Activated T-helper 1 cell treated with anti-CD3 and anti-CD28 coated beads, Interleukin-12 subunit alpha, Interleukin-12 subunit beta, Interleukin-2, Interleukin-4 antibody, amounts not matched to agents 30 ng/mL and 10 ng/mL and 1 ng/mL, durations not matched to agents 14 hours and 24 hours and 36 hours (primary cell): ENCODE measurements at regions of chr14 and their contacts with region 1.

Region 1: GRCh38 chr14:64986578-64987571 is at the start of gene FNTB:
- DNase-seq: peak; percentile 90
- H3K4me3 Mint-ChIP-seq: peak within 1 kb of the TSS; percentile 98
- H3K27ac Mint-ChIP-seq: peak within 1 kb of the TSS; percentile 99
- H3K4me1 Mint-ChIP-seq: peaks cover 51% of the 10 kb centered on the region
- H3K27me3 Mint-ChIP-seq: peaks cover 22% of the 10 kb centered on the region
- total RNA-seq, gene FNTB: 14.3 and 17.8 TPM in 2 replicates

Region 2: GRCh38 chr14:64671591-64671990 is 315.3 kb before region 1 on chr14:
- intact Hi-C with region 1: loop called (anchors 5 kb)
- DNase-seq: no peak
- H3K4me3 Mint-ChIP-seq: no peak overlapping the region
- H3K27ac Mint-ChIP-seq: no peak overlapping the region
- H3K4me1 Mint-ChIP-seq: peaks cover 36% of the 10 kb centered on the region
- H3K27me3 Mint-ChIP-seq: peaks cover 18% of the 10 kb centered on the region

Region 3: DNA sequence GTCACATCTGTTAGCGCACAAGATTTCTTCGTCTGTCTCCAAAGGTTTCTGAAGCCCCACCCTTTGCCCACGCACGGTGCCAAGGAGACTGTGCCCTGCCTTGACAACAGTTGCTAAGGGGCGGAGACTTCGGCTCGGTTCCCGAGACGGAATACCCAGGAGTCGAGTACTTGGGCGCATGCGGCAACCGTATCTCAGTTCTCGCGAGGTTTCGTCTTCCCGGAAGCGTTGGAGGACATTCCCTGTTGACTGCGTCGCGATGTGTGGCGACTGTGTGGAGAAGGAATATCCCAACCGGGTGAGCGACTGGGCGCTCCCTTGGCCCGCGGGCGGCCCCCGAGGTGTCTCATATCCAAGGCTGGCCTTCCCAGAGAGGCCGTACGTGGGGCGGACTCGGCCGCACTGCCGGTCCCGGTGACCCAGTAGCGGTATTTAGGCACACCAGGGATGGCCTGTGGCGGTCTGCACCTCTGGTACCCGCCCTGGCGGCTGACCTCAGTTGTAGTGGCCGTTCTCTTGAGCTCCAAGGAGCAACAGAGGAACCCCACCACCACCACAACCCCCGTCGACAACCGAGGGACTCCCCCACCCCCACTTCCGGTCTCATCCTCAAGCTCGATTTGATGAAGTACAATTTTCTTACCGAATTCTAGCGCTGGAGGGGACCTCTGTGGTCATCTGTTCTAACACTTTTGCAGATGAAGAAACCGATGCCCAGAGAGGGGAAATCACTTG is 72.5 kb before region 1 on chr14 and contains the start of gene CHURC1:
- intact Hi-C with region 1: loop called (anchors 1 kb)
- DNase-seq: peak; percentile 93
- H3K4me3 Mint-ChIP-seq: peak within 1 kb of the TSS; percentile 88
- H3K27ac Mint-ChIP-seq: peak within 1 kb of the TSS; percentile 94
- H3K4me1 Mint-ChIP-seq: peaks cover 51% of the 10 kb centered on the region
- H3K27me3 Mint-ChIP-seq: peaks cover 5% of the 10 kb centered on the region
- total RNA-seq, gene CHURC1: 50.7 and 51.3 TPM in 2 replicates

Region 4: GRCh38 chr14:64971943-64972791 is 14.7 kb before region 1 on chr14 and contains the start of gene RAB15:
- intact Hi-C with region 1: loop called (anchors 1 kb)
- DNase-seq: peak; percentile 29
- H3K4me3 Mint-ChIP-seq: peak within 1 kb of the TSS; percentile 84
- H3K27ac Mint-ChIP-seq: peak within 1 kb of the TSS; percentile 71
- H3K4me1 Mint-ChIP-seq: no peaks in the 10 kb centered on the region
- H3K27me3 Mint-ChIP-seq: peaks cover 31% of the 10 kb centered on the region
- total RNA-seq, gene RAB15: 5.7 and 6.0 TPM in 2 replicates

Region 5: GRCh38 chr14:65019944-65020566 is 33.2 kb after region 1 on chr14:
- intact Hi-C with region 1: loop called (anchors 1 kb)
- DNase-seq: no peak
- H3K4me3 Mint-ChIP-seq: no peak overlapping the region
- H3K27ac Mint-ChIP-seq: no peak overlapping the region
- H3K4me1 Mint-ChIP-seq: no peaks in the 10 kb centered on the region
- H3K27me3 Mint-ChIP-seq: no peaks in the 10 kb centered on the region

Region 6: GRCh38 chr14:65170768-65171507 is 184.1 kb after region 1 on chr14:
- intact Hi-C with region 1: loop called (anchors 2 kb)
- DNase-seq: peak; percentile 49
- H3K4me3 Mint-ChIP-seq: peak overlapping the region; percentile 73
- H3K27ac Mint-ChIP-seq: peak overlapping the region; percentile 88
- H3K4me1 Mint-ChIP-seq: peaks cover 48% of the 10 kb centered on the region
- H3K27me3 Mint-ChIP-seq: no peaks in the 10 kb centered on the region

Region 7: GRCh38 chr14:65302571-65303189 is 315.8 kb after region 1 on chr14:
- intact Hi-C with region 1: loop called (anchors 5 kb)
- DNase-seq: peak; percentile 56
- H3K4me3 Mint-ChIP-seq: peak overlapping the region; percentile 77
- H3K27ac Mint-ChIP-seq: peak overlapping the region; percentile 99
- H3K4me1 Mint-ChIP-seq: peaks cover 81% of the 10 kb centered on the region
- H3K27me3 Mint-ChIP-seq: no peaks in the 10 kb centered on the region